H1 (cell line): ENCODE measurements at regions of chr5 and their contacts with region 1.

Region 1: GRCh38 chr5:149618581-149619251 is 37.4 kb downstream of the ARHGEF37 start:
- DNase-seq: peak in 1 of 2 experiments; percentile 56
- H3K4me3 ChIP-seq: no peak overlapping the region
- H3K27ac ChIP-seq: no peak overlapping the region
- H3K4me1 ChIP-seq: peaks cover 0 to 3% (median 0%) of the 10 kb centered on the region in 4 experiments; a peak in 1 of 7 replicates
- H3K27me3 ChIP-seq: no peaks in the 10 kb centered on the region
- CTCF ChIP-seq: peak; percentile 50 to 83 (median 72)
- EP300 ChIP-seq: no peak
- POLR2A ChIP-seq: no peak
- RAD21 ChIP-seq: peak; percentile 80 to 90

Region 2: GRCh38 chr5:149448831-149449714 is 169.6 kb before region 1 on chr5:
- CTCF ChIA-PET with region 1: interaction called, 14 read pairs
- POLR2A ChIA-PET with region 1: no interaction called
- DNase-seq: no peak
- H3K4me3 ChIP-seq: no peak overlapping the region
- H3K27ac ChIP-seq: no peak overlapping the region
- H3K4me1 ChIP-seq: peaks cover 0 to 19% (median 8%) of the 10 kb centered on the region in 4 experiments; a peak in 6 of 7 replicates
- H3K27me3 ChIP-seq: no peaks in the 10 kb centered on the region
- CTCF ChIP-seq: peak; percentile 17 to 67 (median 45); a peak in 3 of 4 replicates
- EP300 ChIP-seq: no peak
- POLR2A ChIP-seq: no peak
- RAD21 ChIP-seq: peak; percentile 62 to 69

Region 3: GRCh38 chr5:149561848-149562247 is 56.9 kb before region 1 on chr5:
- CTCF ChIA-PET with region 1: interaction called, 13 read pairs
- POLR2A ChIA-PET with region 1: no interaction called
- DNase-seq: no peak
- H3K4me3 ChIP-seq: no peak overlapping the region
- H3K27ac ChIP-seq: peak overlapping the region; percentile 51; the same call in 1 of the 2 replicates
- H3K4me1 ChIP-seq: peaks cover 5 to 12% (median 7%) of the 10 kb centered on the region in 4 experiments; a peak in 6 of 7 replicates
- H3K27me3 ChIP-seq: no peaks in the 10 kb centered on the region
- CTCF ChIP-seq: no peak
- EP300 ChIP-seq: no peak
- POLR2A ChIP-seq: no peak
- RAD21 ChIP-seq: no peak

Region 4: GRCh38 chr5:149581192-149581861 is 37.4 kb before region 1 on chr5 and contains the start of gene ARHGEF37:
- CTCF ChIA-PET with region 1: interaction called, 33 read pairs
- POLR2A ChIA-PET with region 1: no interaction called
- DNase-seq: peak in 1 of 2 experiments; percentile 73
- H3K4me3 ChIP-seq: peak within 1 kb of the TSS; percentile 44 to 64 (median 50)
- H3K27ac ChIP-seq: no peak within 1 kb of the TSS
- H3K4me1 ChIP-seq: peaks cover 0 to 14% (median 5%) of the 10 kb centered on the region in 4 experiments; a peak in 6 of 7 replicates
- H3K27me3 ChIP-seq: peaks cover 0 to 18% (median 13%) of the 10 kb centered on the region in 4 experiments; a peak in 6 of 7 replicates
- CTCF ChIP-seq: no peak
- EP300 ChIP-seq: no peak
- POLR2A ChIP-seq: no peak
- RAD21 ChIP-seq: no peak
- total RNA-seq, gene ARHGEF37: 0.48 and 1.8 TPM in 2 replicates

Region 5: GRCh38 chr5:149605998-149606724 is 12.6 kb before region 1 on chr5:
- CTCF ChIA-PET with region 1: interaction called, 23 read pairs
- POLR2A ChIA-PET with region 1: interaction called, 4 read pairs
- DNase-seq: no peak
- H3K4me3 ChIP-seq: no peak overlapping the region
- H3K27ac ChIP-seq: no peak overlapping the region
- H3K4me1 ChIP-seq: no peaks in the 10 kb centered on the region
- H3K27me3 ChIP-seq: no peaks in the 10 kb centered on the region
- CTCF ChIP-seq: no peak
- EP300 ChIP-seq: no peak
- POLR2A ChIP-seq: no peak
- RAD21 ChIP-seq: no peak

Region 6: DNA sequence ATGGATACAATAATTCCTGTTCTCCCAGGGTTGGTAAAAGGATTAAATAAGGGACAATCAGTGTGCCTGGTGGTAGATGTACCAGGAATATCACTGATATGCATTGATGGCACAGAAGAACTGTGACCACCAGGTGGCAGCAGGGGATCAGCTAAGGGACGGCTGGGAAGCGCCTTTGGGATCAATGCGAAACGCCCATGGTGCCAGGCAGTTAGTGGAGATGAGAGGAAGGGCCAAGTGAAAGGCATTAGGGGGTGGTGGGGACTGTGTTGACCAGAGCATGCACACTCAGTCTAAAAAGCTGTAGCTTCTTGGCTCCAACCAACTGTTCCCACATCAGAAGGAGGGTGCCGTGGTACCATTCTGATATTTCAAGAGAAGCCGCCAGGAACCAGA is 18.1 kb after region 1 on chr5:
- CTCF ChIA-PET with region 1: interaction called, 15 read pairs
- POLR2A ChIA-PET with region 1: interaction called, 3 read pairs
- DNase-seq: peak; percentile 49 to 83
- H3K4me3 ChIP-seq: no peak overlapping the region
- H3K27ac ChIP-seq: no peak overlapping the region
- H3K4me1 ChIP-seq: peaks cover 12 to 16% (median 12%) of the 10 kb centered on the region in 4 experiments
- H3K27me3 ChIP-seq: no peaks in the 10 kb centered on the region; a peak in 1 of 7 replicates
- CTCF ChIP-seq: peak; percentile 85 to 93 (median 91)
- EP300 ChIP-seq: no peak
- POLR2A ChIP-seq: no peak
- RAD21 ChIP-seq: peak; percentile 97 to 98